ENCODE measurements at regions of chr16 and their contacts with region 1.

Region 1: DNA sequence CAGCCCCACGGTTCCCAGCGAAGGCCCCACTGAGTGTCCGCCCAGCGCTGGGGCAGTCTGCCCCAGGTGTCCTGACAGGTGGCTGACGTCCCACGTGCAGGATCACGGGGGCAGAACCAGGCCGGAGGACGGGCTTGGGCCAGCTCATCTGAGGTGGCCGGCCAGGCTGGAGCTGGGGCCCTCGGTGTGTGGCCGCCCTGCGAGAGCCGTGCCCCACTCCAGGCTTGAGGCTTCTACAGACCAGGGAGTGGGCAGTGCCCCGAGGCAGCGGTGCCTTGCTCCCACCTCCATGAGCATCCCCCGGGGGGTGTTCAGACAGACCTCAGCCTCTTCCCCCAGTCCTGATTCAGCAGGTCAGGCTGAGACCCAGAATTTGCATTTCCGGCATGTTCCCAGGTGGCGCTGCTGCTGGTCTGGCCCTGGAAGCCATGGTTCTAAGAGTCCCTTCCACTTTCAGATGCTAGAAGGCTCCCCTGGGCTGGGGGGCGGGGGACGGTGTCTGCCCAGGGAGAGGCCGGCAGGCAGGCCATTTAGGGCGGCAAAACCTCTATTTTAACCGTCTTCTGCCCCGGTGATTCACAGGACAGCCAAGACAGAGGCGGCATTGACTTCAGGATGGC is 35.4 kb upstream of the PABPN1L start:
- DNase-seq: no peak
- ATAC-seq: no peak

Region 2: DNA sequence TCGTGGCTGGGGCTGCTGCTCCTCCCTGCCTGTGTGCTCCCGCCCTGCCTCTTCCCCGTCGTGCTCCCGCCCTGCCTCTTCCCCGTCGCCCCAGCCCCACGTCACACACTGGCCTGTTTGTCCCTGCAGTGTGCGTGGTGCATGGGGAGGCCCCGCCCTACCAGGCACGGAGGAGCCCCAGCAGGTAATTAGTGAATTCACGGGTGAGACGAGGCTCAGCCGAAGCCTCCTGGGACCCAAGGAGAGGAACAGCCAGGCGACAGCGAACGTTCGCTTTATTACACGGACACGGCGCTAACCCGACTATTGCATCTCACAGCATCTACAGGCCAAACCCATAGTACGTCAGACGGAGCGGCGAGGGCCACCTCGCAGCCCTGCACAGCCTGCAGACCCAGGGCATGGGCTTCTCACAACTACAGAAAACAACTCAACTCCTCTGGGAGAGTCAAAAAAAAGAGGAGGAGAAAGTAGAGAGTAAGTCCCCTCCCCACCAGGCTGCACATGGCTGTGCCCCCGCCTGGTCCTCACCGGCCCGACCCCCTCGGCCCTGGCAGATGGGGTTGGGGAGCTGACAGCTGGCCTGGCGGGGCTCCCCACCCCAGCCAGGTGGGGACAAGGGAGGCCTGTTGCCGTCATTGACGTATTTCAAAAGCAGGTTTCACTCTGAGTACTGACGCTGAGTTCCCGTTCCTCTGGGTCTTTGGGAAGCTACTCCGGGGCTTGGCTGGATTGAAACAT is 31.1 kb before region 1 on chr16:
- intact Hi-C with region 1: loop called in 1 of 2 experiments (anchors 2 kb)
- DNase-seq: no peak
- ATAC-seq: peak; percentile 18 to 41

Region 3: DNA sequence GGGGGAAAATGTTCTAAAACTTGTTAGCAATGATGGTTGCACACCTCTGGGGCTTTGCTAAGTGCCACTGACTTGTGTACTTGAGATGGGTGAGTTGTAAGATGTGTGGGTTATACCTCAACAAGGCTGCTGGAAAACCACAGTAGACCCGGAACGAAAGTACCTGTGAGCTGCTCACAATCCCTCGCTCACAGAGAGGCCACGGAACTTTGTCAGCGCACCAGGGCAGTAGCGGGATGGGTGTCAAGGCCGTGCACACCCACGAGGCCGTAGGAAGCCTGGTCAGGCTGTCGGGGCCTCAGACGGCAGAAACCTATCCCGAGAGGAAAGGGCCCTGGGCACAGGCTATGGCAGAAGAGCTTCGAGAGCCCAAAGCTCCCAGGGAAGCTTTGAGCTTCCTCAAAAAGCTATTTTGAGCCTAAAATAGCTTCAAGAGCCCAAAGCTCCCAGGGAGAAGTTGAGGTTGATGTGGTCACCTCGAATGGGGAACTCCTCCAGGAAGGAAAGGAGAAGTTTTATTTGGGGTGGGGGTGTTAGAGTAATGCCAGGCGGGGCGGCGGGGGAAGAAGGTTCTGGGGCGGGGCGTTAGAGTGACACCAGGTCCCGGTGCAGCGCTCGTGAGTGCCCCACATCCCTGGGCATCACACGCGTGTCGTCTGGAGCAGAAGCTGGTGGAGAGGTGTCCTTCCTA is 56.2 kb after region 1 on chr16:
- intact Hi-C with region 1: no loop called
- DNase-seq: no peak
- ATAC-seq: peak; percentile 69 to 77

Measured in left cardiac atrium (tissue), 4 donors.